ENCODE measurements at regions of chr3 and their contacts with region 1.

Region 1: DNA sequence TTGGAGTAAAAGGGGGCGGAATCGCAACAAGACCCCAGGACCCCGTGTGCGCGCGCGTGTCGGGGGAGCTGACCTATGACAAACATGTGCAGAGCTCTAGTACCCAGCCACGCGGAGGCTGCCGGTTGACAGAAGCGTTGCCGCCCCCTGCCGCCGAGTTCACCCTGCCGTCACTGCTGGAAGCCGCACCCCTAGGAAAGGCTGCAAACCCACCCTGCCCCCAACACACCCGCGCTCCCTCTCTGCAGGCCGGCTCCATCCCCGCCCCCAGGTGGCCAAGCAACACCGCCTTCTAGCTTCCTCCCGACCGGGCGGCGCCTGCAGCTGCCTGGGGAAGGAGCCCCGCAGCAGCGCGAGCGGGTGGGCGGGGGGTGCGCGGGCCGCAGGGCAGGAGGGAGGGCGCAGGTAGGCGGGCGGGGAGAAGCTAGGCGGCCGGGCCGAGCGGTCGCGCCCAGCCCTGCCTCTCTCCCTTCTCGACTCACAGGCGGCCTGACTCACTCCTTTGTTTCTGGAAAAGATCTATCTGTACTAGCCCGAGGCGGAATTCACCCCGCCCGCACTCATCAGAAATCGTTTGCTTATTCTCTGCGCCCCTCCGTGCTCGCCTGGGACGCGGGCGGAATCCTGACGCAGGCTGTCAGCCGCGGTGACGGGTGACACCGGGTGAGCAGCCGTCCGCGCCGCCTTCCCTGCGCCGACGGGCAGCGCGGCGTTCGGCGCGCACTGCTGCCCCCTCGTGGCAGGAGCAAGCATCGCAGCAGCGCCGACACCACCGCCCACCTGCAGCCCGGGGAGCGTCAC is 160.8 kb downstream of the GAP43 start:
- DNase-seq: peak; percentile 95
- H3K4me3 Mint-ChIP-seq: peak overlapping the region; percentile 86
- H3K27ac Mint-ChIP-seq: peak overlapping the region; percentile 98
- H3K4me1 Mint-ChIP-seq: peaks cover 15% of the 10 kb centered on the region
- H3K27me3 Mint-ChIP-seq: peaks cover 9% of the 10 kb centered on the region

Region 2: GRCh38 chr3:114223143-114223542 is 1561.0 kb before region 1 on chr3:
- intact Hi-C with region 1: loop called (anchors 10 kb)
- DNase-seq: peak; percentile 73
- H3K4me3 Mint-ChIP-seq: peak overlapping the region; percentile 24
- H3K27ac Mint-ChIP-seq: peak overlapping the region; percentile 86
- H3K4me1 Mint-ChIP-seq: peaks cover 51% of the 10 kb centered on the region
- H3K27me3 Mint-ChIP-seq: no peaks in the 10 kb centered on the region

Region 3: GRCh38 chr3:115092220-115092791 is 691.8 kb before region 1 on chr3:
- intact Hi-C with region 1: loop called (anchors 10 kb)
- DNase-seq: peak; percentile 87
- H3K4me3 Mint-ChIP-seq: no peak overlapping the region
- H3K27ac Mint-ChIP-seq: no peak overlapping the region
- H3K4me1 Mint-ChIP-seq: no peaks in the 10 kb centered on the region
- H3K27me3 Mint-ChIP-seq: no peaks in the 10 kb centered on the region

Region 4: GRCh38 chr3:115658337-115659181 is 125.6 kb before region 1 on chr3:
- intact Hi-C with region 1: loop called (anchors 1 kb)
- DNase-seq: peak; percentile 91
- H3K4me3 Mint-ChIP-seq: peak overlapping the region; percentile 98
- H3K27ac Mint-ChIP-seq: peak overlapping the region; percentile 99
- H3K4me1 Mint-ChIP-seq: peaks cover 23% of the 10 kb centered on the region
- H3K27me3 Mint-ChIP-seq: peaks cover 7% of the 10 kb centered on the region

Region 5: DNA sequence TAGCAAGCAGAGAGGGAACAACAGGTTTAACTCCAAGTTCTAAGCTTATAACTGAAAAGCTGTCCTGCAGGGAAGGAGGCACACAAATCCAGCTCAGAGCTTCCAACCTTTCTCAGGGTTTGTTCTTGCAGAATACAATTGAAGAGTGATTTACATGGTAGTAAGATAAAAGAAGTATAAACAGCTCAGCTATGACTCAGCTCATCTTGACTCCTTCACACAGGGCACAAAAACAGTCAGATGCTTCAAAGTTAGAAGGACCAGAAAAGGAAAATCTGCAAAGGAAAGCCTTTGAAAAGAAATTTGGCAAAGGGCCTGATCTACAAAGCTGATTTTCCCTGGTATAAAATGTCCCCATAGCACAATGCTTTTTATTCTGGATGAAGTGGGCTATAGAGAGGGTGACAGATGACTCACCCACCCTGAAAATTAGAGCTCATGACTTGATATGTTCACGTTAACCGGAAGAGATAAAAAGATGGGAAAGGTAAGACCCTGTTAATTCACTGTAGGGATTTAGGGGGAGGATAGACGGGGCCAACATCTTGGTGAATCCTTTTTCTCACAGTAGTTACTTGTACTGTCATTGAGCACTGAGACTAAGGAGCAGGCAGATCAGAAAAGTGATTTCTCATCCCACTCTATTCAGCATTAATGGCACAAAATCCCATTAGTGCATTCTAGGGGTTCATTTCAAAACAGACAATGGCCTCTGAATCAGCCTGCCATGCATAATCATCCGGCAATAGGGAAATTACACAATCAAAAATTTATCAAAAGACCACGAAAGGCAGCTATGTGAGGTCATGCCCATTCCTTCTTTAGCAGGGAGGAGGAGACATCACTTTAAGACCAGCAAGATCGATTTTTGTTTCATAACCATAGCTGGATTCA is 17.3 kb before region 1 on chr3:
- intact Hi-C with region 1: no loop called
- DNase-seq: no peak
- H3K4me3 Mint-ChIP-seq: no peak overlapping the region
- H3K27ac Mint-ChIP-seq: no peak overlapping the region
- H3K4me1 Mint-ChIP-seq: no peaks in the 10 kb centered on the region
- H3K27me3 Mint-ChIP-seq: peaks cover 18% of the 10 kb centered on the region

Region 6: GRCh38 chr3:115814778-115815380 is 30.7 kb after region 1 on chr3:
- intact Hi-C with region 1: loop called (anchors 2 kb)
- DNase-seq: peak; percentile 90
- H3K4me3 Mint-ChIP-seq: no peak overlapping the region
- H3K27ac Mint-ChIP-seq: no peak overlapping the region
- H3K4me1 Mint-ChIP-seq: no peaks in the 10 kb centered on the region
- H3K27me3 Mint-ChIP-seq: peaks cover 13% of the 10 kb centered on the region

Measured in activated CD4-positive, alpha-beta T cell treated with anti-CD3 and anti-CD28 coated beads, Interleukin-2, amount 10 ng/mL, durations not matched to agents 24 days and 14 days (primary cell).